Natural killer cell (primary cell): ENCODE measurements at regions of chr11 and their contacts with region 1.

Region 1: DNA sequence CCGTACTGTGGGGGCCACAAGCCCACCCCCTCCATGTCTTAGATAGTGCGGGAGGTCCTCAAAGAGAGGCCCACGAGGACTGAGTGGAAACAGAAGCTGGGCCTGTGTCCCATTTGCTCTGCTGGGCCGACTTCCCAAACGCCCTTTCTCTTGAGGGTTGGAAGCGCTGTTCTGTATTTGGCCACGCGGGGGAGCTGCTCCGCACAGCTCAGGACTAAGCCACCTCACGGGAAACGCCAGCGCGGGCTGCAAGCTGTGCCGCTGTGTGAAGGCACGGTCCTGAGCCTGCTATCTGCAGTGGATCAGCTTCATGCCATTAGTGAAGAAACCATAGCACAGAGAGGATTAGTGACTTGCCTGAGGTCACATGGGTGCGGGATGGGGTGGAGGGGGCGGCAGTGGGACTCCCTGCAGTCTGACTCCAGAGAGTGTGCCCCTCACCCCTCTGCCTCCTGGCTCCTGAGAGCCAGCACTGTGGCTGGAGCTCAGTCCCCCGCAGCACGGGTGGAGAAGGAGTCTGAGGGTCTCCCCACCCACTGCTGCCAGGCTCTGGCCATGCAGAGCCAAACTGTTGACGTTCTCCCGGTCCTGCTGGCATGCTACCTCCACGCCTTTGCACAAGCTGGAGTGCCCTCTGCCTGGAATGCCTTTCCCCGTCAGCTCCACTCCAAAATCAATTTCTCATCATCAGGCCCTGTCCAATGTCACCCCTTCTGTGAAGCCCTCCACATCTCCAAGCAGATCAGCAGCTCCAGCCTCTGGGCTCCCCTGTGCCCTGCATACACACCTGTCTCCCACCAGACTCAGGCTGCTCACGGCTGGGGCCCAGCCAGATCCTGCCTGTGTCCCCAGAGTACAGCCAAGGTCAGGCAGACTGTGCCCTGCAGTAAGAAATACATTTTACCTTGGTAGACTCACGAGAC is 51.5 kb upstream of the LRRC32 start:
- DNase-seq: peak; percentile 68 to 83
- ATAC-seq: peak; percentile 87 to 98 (median 92)
- H3K4me3 ChIP-seq: no peak overlapping the region
- H3K4me3 Mint-ChIP-seq: no peak overlapping the region
- H3K27ac ChIP-seq: no peak overlapping the region
- H3K27ac Mint-ChIP-seq: no peak overlapping the region
- H3K4me1 ChIP-seq: peaks cover 8% of the 10 kb centered on the region
- H3K4me1 Mint-ChIP-seq: peaks cover 4% of the 10 kb centered on the region in 2 donors
- H3K27me3 ChIP-seq: peaks cover 7% of the 10 kb centered on the region
- H3K27me3 Mint-ChIP-seq: peaks cover 16 to 28% of the 10 kb centered on the region in 2 donors
- CTCF ChIP-seq: peak; percentile 83

Region 2: GRCh38 chr11:76588455-76589325 is 133.3 kb before region 1 on chr11:
- intact Hi-C with region 1: no loop called
- DNase-seq: peak in 1 of 2 donors; percentile 29
- ATAC-seq: peak in 2 of 3 donors; percentile 31 to 57
- H3K4me3 ChIP-seq: no peak overlapping the region
- H3K4me3 Mint-ChIP-seq: no peak overlapping the region
- H3K27ac ChIP-seq: no peak overlapping the region
- H3K27ac Mint-ChIP-seq: peak overlapping the region in 1 of 2 donors; percentile 62
- H3K4me1 ChIP-seq: peaks cover 10% of the 10 kb centered on the region
- H3K4me1 Mint-ChIP-seq: peaks cover 5 to 10% of the 10 kb centered on the region in 2 donors
- H3K27me3 ChIP-seq: no peaks in the 10 kb centered on the region
- H3K27me3 Mint-ChIP-seq: peaks cover 0 to 2% of the 10 kb centered on the region in 2 donors
- CTCF ChIP-seq: no peak

Region 3: GRCh38 chr11:76799066-76799804 is 77.2 kb after region 1 on chr11:
- intact Hi-C with region 1: loop called (anchors 1 kb)
- DNase-seq: peak; percentile 67 to 87
- ATAC-seq: peak; percentile 90 to 98 (median 98)
- H3K4me3 ChIP-seq: peak overlapping the region; percentile 27
- H3K4me3 Mint-ChIP-seq: peak overlapping the region; percentile 53
- H3K27ac ChIP-seq: no peak overlapping the region
- H3K27ac Mint-ChIP-seq: peak overlapping the region in 1 of 2 donors; percentile 52
- H3K4me1 ChIP-seq: peaks cover 13% of the 10 kb centered on the region
- H3K4me1 Mint-ChIP-seq: peaks cover 0 to 19% of the 10 kb centered on the region in 2 donors
- H3K27me3 ChIP-seq: no peaks in the 10 kb centered on the region
- H3K27me3 Mint-ChIP-seq: peaks cover 7 to 9% of the 10 kb centered on the region in 2 donors
- CTCF ChIP-seq: peak; percentile 88